Aorta (tissue), 5 donors: ENCODE measurements at regions of chr14 and their contacts with region 1.

Region 1: GRCh38 chr14:35292051-35292769 is at the start of gene PSMA6:
- DNase-seq: peak; percentile 99
- ATAC-seq: peak; percentile 100
- H3K4me3 ChIP-seq: peak within 1 kb of the TSS; percentile 74 to 93
- H3K27ac ChIP-seq: peak within 1 kb of the TSS in 1 of 2 donors; percentile 74
- H3K4me1 ChIP-seq: peaks cover 0 to 2% of the 10 kb centered on the region in 2 donors
- H3K27me3 ChIP-seq: no peaks in the 10 kb centered on the region
- total RNA-seq, gene PSMA6: 91.6 to 109 TPM

Region 2: GRCh38 chr14:35341446-35342159 is 49.4 kb after region 1 on chr14:
- intact Hi-C with region 1: loop called (anchors 2 to 5 kb)
- DNase-seq: peak; percentile 98
- ATAC-seq: peak; percentile 94
- H3K4me3 ChIP-seq: no peak overlapping the region
- H3K27ac ChIP-seq: peak overlapping the region; percentile 34 to 59
- H3K4me1 ChIP-seq: no peaks in the 10 kb centered on the region
- H3K27me3 ChIP-seq: no peaks in the 10 kb centered on the region

Region 3: GRCh38 chr14:35385042-35385839 is 93.0 kb after region 1 on chr14:
- intact Hi-C with region 1: loop called in 1 of 2 experiments (anchors 1 kb)
- DNase-seq: peak; percentile 87 to 93
- ATAC-seq: peak; percentile 93
- H3K4me3 ChIP-seq: no peak overlapping the region
- H3K27ac ChIP-seq: peak overlapping the region in 1 of 2 donors; percentile 66
- H3K4me1 ChIP-seq: peaks cover 0 to 4% of the 10 kb centered on the region in 2 donors
- H3K27me3 ChIP-seq: no peaks in the 10 kb centered on the region

Region 4: DNA sequence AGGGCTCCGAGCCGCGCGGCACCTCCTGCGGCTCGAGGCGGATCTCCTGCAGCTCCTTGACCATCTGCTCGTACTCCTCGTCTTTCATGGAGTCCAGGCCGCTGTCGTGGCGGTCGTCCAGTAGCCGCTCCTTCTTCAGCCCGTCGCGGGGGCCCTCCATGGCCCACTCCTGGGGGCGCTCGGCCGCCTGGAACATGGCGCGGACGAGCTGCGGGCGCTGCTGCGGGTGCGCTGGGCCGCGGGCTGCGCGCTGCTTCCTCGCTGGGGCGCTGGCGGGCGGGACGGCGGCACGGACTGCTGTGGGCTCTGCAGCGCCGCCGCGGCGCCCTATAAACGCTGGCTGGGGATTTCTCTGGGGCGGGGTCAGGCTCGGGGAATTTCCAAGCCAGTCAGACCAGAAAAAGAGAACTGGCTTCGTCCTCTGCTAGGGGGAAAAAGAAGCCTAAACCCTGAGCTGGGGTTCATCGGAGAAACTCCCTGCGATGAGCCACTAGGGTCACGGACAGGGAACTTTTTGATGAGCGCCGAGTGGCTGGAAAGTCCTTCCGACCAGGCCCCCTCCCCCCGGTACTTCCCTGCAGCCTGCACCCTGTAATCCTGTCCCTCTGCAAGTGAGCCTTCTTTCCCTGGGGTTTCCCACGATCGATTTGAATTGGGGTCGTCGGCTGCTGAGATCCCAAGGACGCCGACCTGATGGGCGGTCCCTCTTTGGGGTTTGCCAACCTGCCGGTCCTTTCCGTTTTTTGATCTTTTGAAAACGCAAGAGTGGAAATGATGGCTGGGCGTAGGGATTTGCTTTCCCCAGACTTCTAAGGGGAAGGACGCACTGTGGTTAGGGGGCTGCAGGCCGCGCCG is 112.5 kb after region 1 on chr14 and contains the start of gene NFKBIA:
- intact Hi-C with region 1: loop called (anchors 2 kb)
- DNase-seq: peak; percentile 95 to 97
- ATAC-seq: peak; percentile 89
- H3K4me3 ChIP-seq: peak within 1 kb of the TSS; percentile 94 to 97
- H3K27ac ChIP-seq: peak within 1 kb of the TSS; percentile 95 to 99
- H3K4me1 ChIP-seq: peaks cover 0 to 4% of the 10 kb centered on the region in 2 donors
- H3K27me3 ChIP-seq: no peaks in the 10 kb centered on the region
- total RNA-seq, gene NFKBIA: 126 to 186 TPM